ENCODE measurements at regions of chr19 and their contacts with region 1.

Region 1: GRCh38 chr19:27974082-27974513 is 1238.9 kb downstream of the UQCRFS1 start:
- H3K4me3 ChIP-seq: no peak overlapping the region
- H3K27ac ChIP-seq: no peak overlapping the region
- H3K4me1 ChIP-seq: peaks cover 16% of the 10 kb centered on the region
- CTCF ChIP-seq: peak; percentile 82

Region 2: DNA sequence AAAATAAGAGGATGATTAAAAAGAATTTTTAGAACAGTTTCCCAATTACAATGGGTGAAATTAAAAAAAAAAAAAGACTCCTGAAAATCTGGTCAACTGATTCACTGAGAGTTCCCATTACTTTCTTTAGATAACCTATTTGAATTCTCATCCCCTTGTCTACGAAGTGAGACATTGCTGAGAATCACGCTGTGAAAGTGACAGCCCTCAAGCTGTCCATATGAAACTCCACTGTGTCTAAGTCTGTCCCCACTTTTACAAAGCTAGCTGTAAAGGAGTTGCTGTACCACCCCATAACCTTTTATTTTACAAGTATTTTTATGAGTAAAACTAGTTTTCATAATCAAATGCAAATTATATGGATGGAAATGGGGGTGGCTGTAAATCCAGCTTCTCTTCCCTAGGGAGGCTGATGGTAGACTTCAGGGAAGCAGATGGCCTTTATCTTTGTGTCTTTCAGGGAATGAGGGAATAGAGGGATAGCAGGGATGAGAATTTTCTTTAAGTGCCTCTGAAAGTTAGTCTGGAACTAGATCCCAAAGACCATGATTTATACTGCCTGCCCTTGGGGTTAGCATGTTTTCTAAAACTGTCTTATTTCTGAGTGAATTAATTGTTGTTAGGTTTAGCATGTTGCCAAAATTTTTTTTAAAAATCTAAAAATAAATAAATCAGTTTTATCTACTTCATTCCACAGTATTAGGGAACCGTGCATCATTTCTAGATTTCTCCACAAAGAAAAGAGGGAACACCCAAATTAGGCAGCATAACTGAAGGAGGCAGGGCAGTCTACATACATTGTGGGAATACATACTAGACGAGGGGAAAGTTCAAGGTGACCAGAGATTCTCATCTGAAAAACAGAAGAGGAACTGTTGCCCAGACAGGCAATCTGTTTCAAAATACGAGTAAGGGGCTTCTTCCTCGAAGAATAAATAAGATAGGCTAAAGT is 19.8 kb after region 1 on chr19:
- CTCF ChIA-PET with region 1: interaction called, 77 read pairs
- POLR2A ChIA-PET with region 1: no interaction called
- H3K4me3 ChIP-seq: no peak overlapping the region
- H3K27ac ChIP-seq: no peak overlapping the region
- H3K4me1 ChIP-seq: peaks cover 6% of the 10 kb centered on the region; the same call in 1 of the 2 replicates
- CTCF ChIP-seq: no peak

Region 3: GRCh38 chr19:28217022-28217421 is 242.9 kb after region 1 on chr19:
- CTCF ChIA-PET with region 1: interaction called, 26 read pairs
- POLR2A ChIA-PET with region 1: no interaction called
- H3K4me3 ChIP-seq: no peak overlapping the region
- H3K27ac ChIP-seq: no peak overlapping the region
- H3K4me1 ChIP-seq: no peaks in the 10 kb centered on the region; the same call in 1 of the 2 replicates
- CTCF ChIP-seq: peak; percentile 77

Region 4: DNA sequence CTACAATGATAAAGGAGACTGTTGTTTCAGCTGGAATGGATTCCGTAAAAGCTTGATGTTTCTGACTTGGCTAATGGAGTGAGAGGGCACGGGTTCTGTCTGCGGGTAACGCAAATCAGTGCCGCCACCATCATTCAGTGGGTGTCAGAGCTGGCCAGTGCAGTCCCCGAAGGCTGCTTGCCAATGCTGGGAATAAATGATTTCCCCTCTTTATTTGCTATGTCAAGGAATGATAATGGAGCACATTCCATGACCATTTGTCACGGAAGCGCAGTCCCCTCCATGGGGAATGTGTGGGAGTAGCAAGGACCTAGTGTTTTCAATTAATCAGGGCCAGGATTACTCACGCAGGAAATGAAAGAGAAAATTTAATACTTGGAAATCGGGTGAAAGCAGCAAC is 339.5 kb after region 1 on chr19:
- CTCF ChIA-PET with region 1: interaction called, 566 read pairs
- POLR2A ChIA-PET with region 1: no interaction called
- H3K4me3 ChIP-seq: no peak overlapping the region
- H3K27ac ChIP-seq: no peak overlapping the region
- H3K4me1 ChIP-seq: peaks cover 10% of the 10 kb centered on the region
- CTCF ChIP-seq: no peak

Region 5: GRCh38 chr19:28705008-28705407 is 730.9 kb after region 1 on chr19:
- CTCF ChIA-PET with region 1: interaction called, 32 read pairs
- POLR2A ChIA-PET with region 1: no interaction called
- H3K4me3 ChIP-seq: no peak overlapping the region
- H3K27ac ChIP-seq: no peak overlapping the region
- H3K4me1 ChIP-seq: peaks cover 11% of the 10 kb centered on the region; the same call in 1 of the 2 replicates
- CTCF ChIP-seq: peak; percentile 45; the same call in 1 of the 2 replicates

Region 6: DNA sequence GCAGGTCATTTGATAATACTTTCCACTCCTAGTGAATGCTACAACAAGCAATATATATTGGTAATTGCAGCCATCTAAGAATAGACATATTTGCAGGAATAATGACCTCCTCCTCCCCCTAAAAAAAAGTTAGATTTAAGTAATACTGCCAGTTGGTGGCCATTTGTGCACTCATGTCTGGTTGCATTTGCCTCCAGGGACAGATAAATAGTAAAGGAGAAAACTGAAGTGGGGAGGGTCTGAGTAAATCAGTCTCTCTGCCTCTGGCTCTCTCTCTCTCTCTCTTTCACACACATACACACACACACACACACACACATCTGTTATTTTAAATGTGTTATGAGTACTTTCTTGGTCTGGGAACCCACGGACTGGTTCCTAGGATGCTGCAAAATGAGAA is 1364.4 kb after region 1 on chr19:
- CTCF ChIA-PET with region 1: no interaction called
- POLR2A ChIA-PET with region 1: no interaction called
- H3K4me3 ChIP-seq: no peak overlapping the region
- H3K27ac ChIP-seq: no peak overlapping the region
- H3K4me1 ChIP-seq: no peaks in the 10 kb centered on the region; the same call in 1 of the 2 replicates
- CTCF ChIP-seq: no peak

Measured in HEK293 (cell line).